Activated CD8-positive, alpha-beta T cell treated with anti-CD3 and anti-CD28 coated beads for 36 hours (primary cell): ENCODE measurements at regions of chrX and their contacts with region 1.

Region 1: DNA sequence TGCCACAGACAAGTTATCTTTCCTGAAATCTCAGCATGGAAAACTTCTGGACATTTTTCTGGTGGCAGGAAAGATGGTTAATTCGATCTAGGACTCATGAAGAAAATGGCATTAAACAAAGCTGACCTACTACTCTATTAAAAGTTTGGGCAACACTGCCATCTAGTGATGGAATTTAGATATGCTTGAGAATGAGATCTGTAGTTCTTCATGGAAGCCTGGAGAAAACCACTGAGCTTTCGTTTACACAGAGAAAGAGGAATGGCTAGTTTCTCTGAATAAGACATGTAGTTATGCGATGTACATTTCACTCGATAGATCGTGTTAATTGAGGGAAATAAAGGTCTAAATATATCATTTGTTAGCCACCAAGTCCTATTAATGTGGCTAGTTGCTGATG is 51.7 kb upstream of the CHRDL1 start:
- DNase-seq: no peak
- ATAC-seq: no peak
- H3K4me3 Mint-ChIP-seq: no peak overlapping the region
- H3K27ac Mint-ChIP-seq: no peak overlapping the region
- H3K4me1 Mint-ChIP-seq: no peaks in the 10 kb centered on the region
- H3K27me3 Mint-ChIP-seq: no peaks in the 10 kb centered on the region
- CTCF ChIP-seq: peak; percentile 40

Region 2: GRCh38 chrX:110450050-110450449 is 397.3 kb before region 1 on chrX:
- CTCF ChIA-PET with region 1: interaction called, 13 read pairs
- POLR2A ChIA-PET with region 1: no interaction called
- intact Hi-C with region 1: loop called (anchors 2 kb)
- DNase-seq: peak; percentile 68
- ATAC-seq: peak; percentile 71
- H3K4me3 Mint-ChIP-seq: no peak overlapping the region
- H3K27ac Mint-ChIP-seq: no peak overlapping the region
- H3K4me1 Mint-ChIP-seq: no peaks in the 10 kb centered on the region
- H3K27me3 Mint-ChIP-seq: peaks cover under 1% of the 10 kb centered on the region
- CTCF ChIP-seq: peak; percentile 65

Region 3: DNA sequence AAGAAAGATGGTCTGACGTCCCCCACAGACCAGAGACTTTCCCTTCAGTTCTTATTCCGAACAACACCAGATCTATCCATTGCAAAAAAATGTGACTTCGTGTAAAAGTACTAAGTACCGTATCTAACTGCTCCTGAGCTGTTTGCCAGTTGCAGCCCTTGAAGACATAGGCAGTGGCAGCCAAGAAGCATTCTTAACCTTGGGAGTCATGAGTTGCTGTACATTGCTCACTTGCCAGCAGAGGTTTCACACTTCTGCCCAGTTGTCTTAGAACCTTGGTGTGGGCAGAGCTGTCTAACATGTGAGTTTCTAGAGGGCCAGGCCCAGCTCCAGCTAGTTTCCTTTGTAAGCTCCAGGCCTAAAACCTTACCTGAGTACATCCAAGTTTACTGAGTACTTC is 41.2 kb before region 1 on chrX:
- CTCF ChIA-PET with region 1: no interaction called
- POLR2A ChIA-PET with region 1: no interaction called
- intact Hi-C with region 1: no loop called
- DNase-seq: no peak
- ATAC-seq: no peak
- H3K4me3 Mint-ChIP-seq: no peak overlapping the region
- H3K27ac Mint-ChIP-seq: no peak overlapping the region
- H3K4me1 Mint-ChIP-seq: no peaks in the 10 kb centered on the region
- H3K27me3 Mint-ChIP-seq: no peaks in the 10 kb centered on the region
- CTCF ChIP-seq: no peak

Region 4: DNA sequence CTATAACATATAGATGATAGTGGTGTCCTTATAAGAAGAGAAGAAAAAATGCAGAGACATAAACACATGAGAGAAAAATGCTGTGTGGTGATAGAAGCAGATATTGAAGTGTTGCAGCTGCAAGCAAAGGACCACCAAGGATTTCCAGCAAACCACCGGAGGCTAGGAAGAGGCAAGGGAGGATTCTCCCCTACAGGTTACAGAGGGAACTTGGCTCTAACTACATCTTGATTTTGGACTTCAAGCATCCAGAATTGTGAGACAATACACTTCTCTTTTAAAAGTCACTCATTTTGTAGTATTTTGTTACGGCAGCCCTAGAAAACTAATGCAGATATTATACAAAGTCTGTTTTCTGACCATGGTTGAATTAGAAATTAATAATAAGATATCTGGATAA is 21.4 kb before region 1 on chrX:
- CTCF ChIA-PET with region 1: no interaction called
- POLR2A ChIA-PET with region 1: no interaction called
- intact Hi-C with region 1: no loop called
- DNase-seq: no peak
- ATAC-seq: no peak
- H3K4me3 Mint-ChIP-seq: no peak overlapping the region
- H3K27ac Mint-ChIP-seq: no peak overlapping the region
- H3K4me1 Mint-ChIP-seq: no peaks in the 10 kb centered on the region
- H3K27me3 Mint-ChIP-seq: no peaks in the 10 kb centered on the region
- CTCF ChIP-seq: no peak

Region 5: DNA sequence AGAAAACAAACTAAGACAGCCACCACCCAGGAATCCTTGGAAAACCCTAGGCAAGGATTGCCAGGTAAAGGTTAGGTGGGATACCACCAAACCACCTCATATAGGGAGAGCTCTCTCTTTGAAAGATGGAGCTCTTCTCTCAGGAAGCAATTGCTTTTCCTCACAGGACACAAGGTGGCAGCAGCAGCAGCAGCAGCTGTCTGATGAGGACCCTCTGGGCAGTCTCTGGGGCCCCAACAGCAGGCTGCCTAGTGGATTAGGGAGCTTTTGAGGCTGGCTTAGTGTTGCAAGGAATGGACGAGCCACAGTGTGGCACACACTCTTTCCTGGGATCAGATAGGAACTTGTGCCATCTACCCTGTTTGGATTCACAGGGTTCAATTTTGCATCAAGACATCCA is 10.4 kb before region 1 on chrX:
- CTCF ChIA-PET with region 1: interaction called, 18 read pairs
- POLR2A ChIA-PET with region 1: no interaction called
- intact Hi-C with region 1: no loop called
- DNase-seq: no peak
- ATAC-seq: no peak
- H3K4me3 Mint-ChIP-seq: no peak overlapping the region
- H3K27ac Mint-ChIP-seq: no peak overlapping the region
- H3K4me1 Mint-ChIP-seq: no peaks in the 10 kb centered on the region
- H3K27me3 Mint-ChIP-seq: no peaks in the 10 kb centered on the region
- CTCF ChIP-seq: no peak

Region 6: DNA sequence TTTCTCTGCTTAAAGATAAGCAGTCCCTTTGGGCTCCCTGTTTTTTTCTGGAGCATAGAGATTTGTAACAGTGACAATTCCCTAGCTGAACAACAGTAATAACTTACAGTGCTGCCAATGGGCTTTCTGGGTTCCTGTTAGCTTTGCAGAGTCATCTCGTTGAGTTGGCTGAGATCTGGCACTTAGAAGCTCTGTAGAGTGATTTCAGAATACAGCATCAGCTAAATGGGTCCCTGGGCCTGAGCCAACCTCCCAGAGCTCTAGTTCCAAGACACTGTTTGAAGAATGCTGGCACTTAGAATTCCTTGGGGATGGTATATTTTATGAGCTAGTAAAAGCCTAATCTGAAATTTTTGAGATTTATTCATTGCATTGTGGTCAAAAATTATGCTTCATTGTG is 620.6 kb after region 1 on chrX:
- CTCF ChIA-PET with region 1: no interaction called
- POLR2A ChIA-PET with region 1: no interaction called
- intact Hi-C with region 1: no loop called
- DNase-seq: no peak
- ATAC-seq: no peak
- H3K4me3 Mint-ChIP-seq: no peak overlapping the region
- H3K27ac Mint-ChIP-seq: no peak overlapping the region
- H3K4me1 Mint-ChIP-seq: no peaks in the 10 kb centered on the region
- H3K27me3 Mint-ChIP-seq: no peaks in the 10 kb centered on the region
- CTCF ChIP-seq: no peak